PC-9 (cell line): ENCODE measurements at regions of chr14 and their contacts with region 1.

Region 1: GRCh38 chr14:76352639-76353281 is 23.2 kb upstream of the ESRRB start:
- DNase-seq: peak in 1 of 2 experiments; percentile 44
- H3K4me3 ChIP-seq: no peak overlapping the region
- H3K27ac ChIP-seq: no peak overlapping the region
- H3K4me1 ChIP-seq: no peaks in the 10 kb centered on the region
- H3K27me3 ChIP-seq: peaks cover 77% of the 10 kb centered on the region
- CTCF ChIP-seq: peak; percentile 60

Region 2: GRCh38 chr14:75864352-75864751 is 488.4 kb before region 1 on chr14:
- CTCF ChIA-PET with region 1: no interaction called
- POLR2A ChIA-PET with region 1: interaction called, 26 read pairs
- intact Hi-C with region 1: no loop called
- DNase-seq: peak in 1 of 2 experiments; percentile 93
- H3K4me3 ChIP-seq: no peak overlapping the region
- H3K27ac ChIP-seq: peak overlapping the region; percentile 33
- H3K4me1 ChIP-seq: peaks cover 66% of the 10 kb centered on the region
- H3K27me3 ChIP-seq: no peaks in the 10 kb centered on the region
- CTCF ChIP-seq: no peak

Region 3: DNA sequence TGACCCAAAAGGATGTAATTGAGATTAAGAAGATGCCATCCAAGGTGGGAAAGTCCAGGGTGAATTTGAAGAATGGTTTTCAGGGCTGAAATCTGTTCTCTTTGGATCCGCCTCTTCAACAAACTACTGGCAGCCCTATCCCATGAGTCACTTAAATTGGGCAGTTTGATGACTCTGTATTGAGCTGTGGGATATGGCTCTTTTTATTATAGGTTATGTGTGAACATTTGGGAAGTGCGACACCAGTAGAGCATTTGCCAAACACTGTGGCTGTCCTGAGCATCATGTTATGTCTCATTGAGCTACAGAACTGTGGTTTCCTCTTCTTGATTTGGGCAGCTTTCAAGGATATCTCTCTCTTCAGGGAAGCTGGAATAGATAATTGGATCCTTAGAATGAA is 344.9 kb before region 1 on chr14:
- CTCF ChIA-PET with region 1: no interaction called
- POLR2A ChIA-PET with region 1: no interaction called
- intact Hi-C with region 1: no loop called
- DNase-seq: no peak
- H3K4me3 ChIP-seq: no peak overlapping the region
- H3K27ac ChIP-seq: no peak overlapping the region
- H3K4me1 ChIP-seq: no peaks in the 10 kb centered on the region
- H3K27me3 ChIP-seq: no peaks in the 10 kb centered on the region
- CTCF ChIP-seq: no peak

Region 4: GRCh38 chr14:76050797-76051392 is 301.9 kb before region 1 on chr14:
- CTCF ChIA-PET with region 1: interaction called, 6 read pairs
- POLR2A ChIA-PET with region 1: no interaction called
- intact Hi-C with region 1: loop called (anchors 1 kb)
- DNase-seq: peak; percentile 59 to 64
- H3K4me3 ChIP-seq: no peak overlapping the region
- H3K27ac ChIP-seq: no peak overlapping the region
- H3K4me1 ChIP-seq: no peaks in the 10 kb centered on the region
- H3K27me3 ChIP-seq: no peaks in the 10 kb centered on the region
- CTCF ChIP-seq: peak; percentile 99

Region 5: DNA sequence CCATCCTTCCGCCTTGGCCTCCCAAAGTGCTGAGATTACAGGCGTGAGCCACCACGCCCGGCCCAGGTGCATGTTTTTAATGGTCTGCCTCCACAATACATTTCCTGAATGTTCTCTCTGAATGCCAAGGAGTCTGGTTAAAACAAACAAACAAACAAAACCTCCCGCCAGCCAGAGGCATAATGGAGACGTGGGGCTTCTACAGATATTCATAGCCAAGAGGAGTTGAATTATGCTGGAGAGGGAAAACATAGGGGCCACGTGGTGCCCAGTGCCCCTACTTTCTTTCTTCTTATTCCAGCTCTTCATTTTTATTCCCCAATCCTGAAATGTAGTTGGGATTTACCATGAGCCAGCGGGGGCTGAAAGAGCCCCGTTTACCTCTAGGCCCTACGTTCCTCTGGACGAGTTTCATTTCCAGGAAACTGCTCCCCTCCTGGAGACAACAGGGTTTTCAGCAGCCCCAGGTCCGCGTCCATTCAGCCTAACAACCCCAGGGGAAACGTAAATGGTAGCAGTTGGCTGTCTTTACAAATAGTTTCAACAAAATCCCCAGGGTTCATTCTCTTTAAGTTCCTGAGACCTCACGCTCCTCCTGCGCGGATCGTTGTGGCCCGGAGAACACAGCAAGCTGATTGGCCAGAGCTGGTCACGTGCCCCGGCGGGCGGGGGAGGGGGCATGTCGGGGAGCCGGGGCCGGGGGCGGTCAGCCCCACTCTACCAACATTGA is 85.3 kb before region 1 on chr14:
- CTCF ChIA-PET with region 1: no interaction called
- POLR2A ChIA-PET with region 1: no interaction called
- intact Hi-C with region 1: no loop called
- DNase-seq: no peak
- H3K4me3 ChIP-seq: no peak overlapping the region
- H3K27ac ChIP-seq: no peak overlapping the region
- H3K4me1 ChIP-seq: no peaks in the 10 kb centered on the region
- H3K27me3 ChIP-seq: peaks cover 98% of the 10 kb centered on the region
- CTCF ChIP-seq: no peak

Region 6: GRCh38 chr14:76537906-76538647 is 185.3 kb after region 1 on chr14:
- CTCF ChIA-PET with region 1: no interaction called
- POLR2A ChIA-PET with region 1: no interaction called
- intact Hi-C with region 1: no loop called
- DNase-seq: no peak
- H3K4me3 ChIP-seq: no peak overlapping the region
- H3K27ac ChIP-seq: no peak overlapping the region
- H3K4me1 ChIP-seq: no peaks in the 10 kb centered on the region
- H3K27me3 ChIP-seq: peaks cover 88% of the 10 kb centered on the region
- CTCF ChIP-seq: no peak

Region 7: GRCh38 chr14:76784266-76785264 is 431.8 kb after region 1 on chr14:
- CTCF ChIA-PET with region 1: interaction called, 13 read pairs
- POLR2A ChIA-PET with region 1: no interaction called
- intact Hi-C with region 1: no loop called
- DNase-seq: peak; percentile 65 to 80
- H3K4me3 ChIP-seq: no peak overlapping the region
- H3K27ac ChIP-seq: no peak overlapping the region
- H3K4me1 ChIP-seq: no peaks in the 10 kb centered on the region
- H3K27me3 ChIP-seq: no peaks in the 10 kb centered on the region
- CTCF ChIP-seq: peak; percentile 83